ENCODE measurements at regions of chr1 and their contacts with region 1.

Region 1: DNA sequence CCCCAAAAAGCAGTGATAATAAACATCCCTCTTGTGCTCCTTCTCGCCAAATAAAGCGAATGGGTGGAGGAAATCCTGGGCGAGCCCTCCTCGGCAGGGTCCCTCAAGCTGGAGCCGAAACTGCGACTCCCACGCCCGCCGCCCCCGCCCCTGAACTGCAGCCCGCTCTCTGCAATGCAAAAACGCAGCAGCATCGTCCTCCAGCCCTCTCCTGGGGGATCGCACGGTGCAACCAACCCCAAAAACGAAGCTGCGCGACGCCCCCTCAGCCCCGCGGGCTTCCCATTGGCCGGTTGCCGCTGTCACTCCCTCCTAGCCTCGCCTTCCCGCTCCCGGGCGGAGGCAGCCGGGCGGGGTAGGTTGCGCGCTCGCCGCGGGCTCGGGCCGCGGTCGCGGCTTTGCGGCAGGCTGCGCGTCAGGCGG is at the start of gene TMCC2:
- DNase-seq: peak; percentile 57 to 87 (median 73)
- ATAC-seq: peak; percentile 86
- H3K4me3 ChIP-seq: peak within 1 kb of the TSS; percentile 75
- H3K4me3 Mint-ChIP-seq: peak within 1 kb of the TSS; percentile 86 to 99 (median 94)
- H3K27ac ChIP-seq: peak within 1 kb of the TSS; percentile 1
- H3K27ac Mint-ChIP-seq: peak within 1 kb of the TSS; percentile 43 to 90 (median 82)
- H3K4me1 ChIP-seq: peaks cover 10 to 13% of the 10 kb centered on the region in 2 donors
- H3K4me1 Mint-ChIP-seq: peaks cover 12 to 51% (median 18%) of the 10 kb centered on the region in 7 donors
- H3K27me3 ChIP-seq: no peaks in the 10 kb centered on the region
- H3K27me3 Mint-ChIP-seq: peaks cover 0 to 44% (median 4%) of the 10 kb centered on the region in 5 donors
- total RNA-seq, gene TMCC2: 1.1 to 3.6 (median 1.8) TPM

Region 2: GRCh38 chr1:204417231-204417997 is 810.2 kb before region 1 on chr1:
- CTCF ChIA-PET with region 1: no interaction called
- POLR2A ChIA-PET with region 1: no interaction called
- intact Hi-C with region 1: no loop called
- DNase-seq: no peak
- ATAC-seq: peak; percentile 85
- H3K4me3 ChIP-seq: no peak overlapping the region
- H3K4me3 Mint-ChIP-seq: peak overlapping the region in 2 of 10 donors; percentile 2 to 29
- H3K27ac ChIP-seq: no peak overlapping the region
- H3K27ac Mint-ChIP-seq: peak overlapping the region in 6 of 9 donors; percentile 5 to 67 (median 7)
- H3K4me1 ChIP-seq: no peaks in the 10 kb centered on the region
- H3K4me1 Mint-ChIP-seq: peaks cover 4 to 29% (median 11%) of the 10 kb centered on the region in 7 donors
- H3K27me3 ChIP-seq: no peaks in the 10 kb centered on the region
- H3K27me3 Mint-ChIP-seq: no peaks in the 10 kb centered on the region

Region 3: DNA sequence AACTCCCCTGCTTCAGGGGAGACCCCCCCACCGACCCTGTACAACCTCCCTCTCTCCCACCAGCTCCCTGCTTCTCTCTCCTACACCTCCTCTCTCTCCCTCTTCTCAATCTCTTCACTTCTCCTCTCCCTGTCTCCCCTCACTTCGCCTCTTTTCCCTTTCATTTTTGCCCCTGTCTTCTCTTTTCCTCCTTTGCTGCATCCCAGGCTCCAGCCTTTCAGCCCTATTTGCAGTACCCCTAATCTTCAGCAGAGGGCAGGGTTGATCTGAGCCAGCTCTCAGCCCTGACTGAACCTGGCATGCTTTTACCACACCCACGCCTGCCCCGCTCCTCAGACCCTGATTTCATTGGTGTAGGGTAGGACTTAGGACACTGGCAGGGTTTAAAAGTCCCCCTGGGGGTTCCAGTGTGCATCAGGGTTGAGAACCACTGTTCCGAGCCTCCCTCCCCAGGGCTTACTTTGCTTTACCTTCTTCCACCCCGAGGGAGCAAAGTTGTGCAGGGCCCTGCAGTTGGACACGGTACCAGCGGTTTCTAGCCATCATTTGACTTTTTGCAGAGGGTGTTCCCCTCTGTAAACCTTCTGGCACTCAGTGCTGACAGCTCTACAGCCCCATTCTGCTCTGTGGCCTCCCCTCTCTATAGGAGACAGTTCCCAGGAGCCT is 251.9 kb before region 1 on chr1:
- CTCF ChIA-PET with region 1: interaction called, 3 read pairs
- POLR2A ChIA-PET with region 1: interaction called, 3 read pairs
- intact Hi-C with region 1: loop called in 1 of 2 experiments (anchors 1 kb)
- DNase-seq: peak; percentile 14 to 60 (median 40)
- ATAC-seq: peak; percentile 71
- H3K4me3 ChIP-seq: no peak overlapping the region
- H3K4me3 Mint-ChIP-seq: no peak overlapping the region
- H3K27ac ChIP-seq: no peak overlapping the region
- H3K27ac Mint-ChIP-seq: no peak overlapping the region
- H3K4me1 ChIP-seq: no peaks in the 10 kb centered on the region
- H3K4me1 Mint-ChIP-seq: peaks cover 0 to 2% (median 0%) of the 10 kb centered on the region in 7 donors
- H3K27me3 ChIP-seq: no peaks in the 10 kb centered on the region
- H3K27me3 Mint-ChIP-seq: peaks cover 0 to 32% (median 20%) of the 10 kb centered on the region in 5 donors

Region 4: DNA sequence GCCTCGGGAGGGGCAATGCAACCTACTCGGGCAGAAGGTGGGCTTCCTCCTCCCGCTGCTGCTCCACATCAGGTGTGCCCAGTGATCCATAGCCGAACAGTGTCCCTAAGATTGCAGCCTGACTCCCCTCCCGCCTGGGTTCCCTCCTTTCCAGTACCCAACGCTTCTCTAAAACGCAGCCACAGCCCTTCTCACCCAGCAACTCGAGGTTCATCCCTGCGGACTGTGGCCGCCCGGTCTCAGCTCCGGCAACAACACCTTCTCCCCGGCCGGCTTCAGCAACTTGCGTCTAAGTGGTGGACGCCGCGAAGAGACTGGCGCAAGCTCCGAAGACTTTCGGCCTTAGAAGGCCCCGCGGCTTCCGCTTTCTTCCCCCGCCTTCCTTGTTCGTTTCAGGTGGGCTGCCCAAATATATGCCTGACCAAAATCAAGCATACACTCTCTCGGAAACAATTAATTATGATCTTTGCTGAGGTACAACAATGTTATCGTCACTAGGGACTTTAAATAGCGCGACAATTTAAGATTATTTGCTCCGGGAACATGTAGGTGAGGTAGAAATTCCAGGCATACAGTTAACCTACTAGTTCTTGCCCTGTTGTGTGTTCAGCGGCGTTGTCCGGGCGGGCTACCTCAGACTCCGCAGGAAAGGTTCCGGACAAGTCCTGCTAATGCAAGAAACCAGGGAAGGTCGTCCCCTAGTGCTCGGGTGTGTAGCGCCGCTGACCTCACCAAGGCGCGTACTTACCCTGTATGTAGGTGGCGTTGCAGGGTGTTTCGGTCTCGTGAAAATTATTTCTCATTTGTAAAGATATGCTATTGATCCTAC is 105.7 kb before region 1 on chr1 and contains the start of gene RBBP5:
- CTCF ChIA-PET with region 1: no interaction called
- POLR2A ChIA-PET with region 1: no interaction called
- intact Hi-C with region 1: loop called (anchors 1 kb)
- DNase-seq: peak; percentile 87 to 97 (median 93)
- ATAC-seq: peak; percentile 98
- H3K4me3 ChIP-seq: peak within 1 kb of the TSS; percentile 89
- H3K4me3 Mint-ChIP-seq: peak within 1 kb of the TSS; percentile 89 to 99 (median 96)
- H3K27ac ChIP-seq: peak within 1 kb of the TSS; percentile 86
- H3K27ac Mint-ChIP-seq: peak within 1 kb of the TSS; percentile 98 to 100 (median 99)
- H3K4me1 ChIP-seq: peaks cover 18 to 24% of the 10 kb centered on the region in 2 donors
- H3K4me1 Mint-ChIP-seq: peaks cover 30 to 56% (median 51%) of the 10 kb centered on the region in 7 donors
- H3K27me3 ChIP-seq: no peaks in the 10 kb centered on the region
- H3K27me3 Mint-ChIP-seq: no peaks in the 10 kb centered on the region
- total RNA-seq, gene RBBP5: 11.0 to 31.5 (median 21.0) TPM

Region 5: GRCh38 chr1:205344066-205344928 is 116.7 kb after region 1 on chr1:
- CTCF ChIA-PET with region 1: no interaction called
- POLR2A ChIA-PET with region 1: no interaction called
- intact Hi-C with region 1: no loop called
- DNase-seq: peak; percentile 30 to 63 (median 46)
- ATAC-seq: peak; percentile 81
- H3K4me3 ChIP-seq: peak overlapping the region; percentile 36
- H3K4me3 Mint-ChIP-seq: peak overlapping the region; percentile 58 to 83 (median 76)
- H3K27ac ChIP-seq: no peak overlapping the region
- H3K27ac Mint-ChIP-seq: no peak overlapping the region
- H3K4me1 ChIP-seq: peaks cover 0 to 6% of the 10 kb centered on the region in 2 donors
- H3K4me1 Mint-ChIP-seq: peaks cover 4 to 14% (median 10%) of the 10 kb centered on the region in 7 donors
- H3K27me3 ChIP-seq: peaks cover 0 to 8% of the 10 kb centered on the region in 2 donors
- H3K27me3 Mint-ChIP-seq: peaks cover 38 to 81% (median 45%) of the 10 kb centered on the region in 5 donors